Gastrocnemius medialis (tissue), 4 donors: ENCODE measurements at regions of chr17 and their contacts with region 1.

Region 1: GRCh38 chr17:52106638-52107261 is 51.8 kb downstream of the CA10 start:
- DNase-seq: no peak
- ATAC-seq: no peak
- H3K4me3 ChIP-seq: no peak overlapping the region
- H3K27ac ChIP-seq: no peak overlapping the region
- H3K4me1 ChIP-seq: no peaks in the 10 kb centered on the region
- H3K27me3 ChIP-seq: no peaks in the 10 kb centered on the region
- CTCF ChIP-seq: peak; percentile 33 to 64 (median 46)
- POLR2A ChIP-seq: no peak

Region 2: GRCh38 chr17:51322390-51323029 is 784.2 kb before region 1 on chr17:
- in situ Hi-C with region 1: loop called in 1 of 4 experiments (anchors 25 kb)
- intact Hi-C with region 1: no loop called
- DNase-seq: no peak
- ATAC-seq: no peak
- H3K4me3 ChIP-seq: no peak overlapping the region
- H3K27ac ChIP-seq: no peak overlapping the region
- H3K4me1 ChIP-seq: no peaks in the 10 kb centered on the region
- H3K27me3 ChIP-seq: no peaks in the 10 kb centered on the region
- CTCF ChIP-seq: no peak
- POLR2A ChIP-seq: no peak

Region 3: DNA sequence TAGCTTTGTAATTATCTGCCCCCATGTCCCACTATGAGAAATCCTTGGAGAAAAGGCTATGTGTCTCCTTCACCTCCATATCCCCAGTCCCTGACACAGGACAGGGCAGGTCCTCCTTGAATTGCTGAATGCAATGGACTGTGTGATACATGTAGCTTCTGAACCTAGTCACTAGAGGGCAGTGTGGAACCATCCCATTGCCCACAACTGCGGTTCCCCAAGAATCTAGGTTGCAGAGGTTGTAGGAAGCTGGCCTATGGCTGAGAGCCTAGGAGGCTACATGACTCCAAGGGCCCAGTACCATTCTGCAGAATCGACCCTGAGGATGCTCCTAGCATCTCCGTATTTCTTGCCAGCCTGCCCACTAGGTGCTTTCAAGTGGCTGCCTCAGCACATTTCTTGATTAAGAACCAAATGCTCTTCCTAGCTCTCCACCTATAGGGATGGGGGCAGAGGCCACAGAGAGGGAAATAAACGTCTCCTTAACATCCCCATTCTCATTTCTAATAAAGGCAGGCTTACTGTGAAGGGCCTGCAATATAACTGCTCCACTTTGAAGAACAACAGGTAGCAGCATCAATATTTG is 342.3 kb before region 1 on chr17:
- in situ Hi-C with region 1: loop called in 1 of 4 experiments (anchors 10 kb)
- intact Hi-C with region 1: no loop called
- DNase-seq: no peak
- ATAC-seq: peak; percentile 65 to 85
- H3K4me3 ChIP-seq: no peak overlapping the region
- H3K27ac ChIP-seq: no peak overlapping the region
- H3K4me1 ChIP-seq: no peaks in the 10 kb centered on the region
- H3K27me3 ChIP-seq: no peaks in the 10 kb centered on the region
- CTCF ChIP-seq: peak in 4 of 5 experiments; percentile 19 to 83 (median 59)
- POLR2A ChIP-seq: no peak

Region 4: GRCh38 chr17:52024300-52024870 is 82.4 kb before region 1 on chr17:
- in situ Hi-C with region 1: loop called in 1 of 4 experiments (anchors 25 kb)
- intact Hi-C with region 1: no loop called
- DNase-seq: no peak
- ATAC-seq: no peak
- H3K4me3 ChIP-seq: no peak overlapping the region
- H3K27ac ChIP-seq: no peak overlapping the region
- H3K4me1 ChIP-seq: no peaks in the 10 kb centered on the region
- H3K27me3 ChIP-seq: no peaks in the 10 kb centered on the region
- CTCF ChIP-seq: no peak
- POLR2A ChIP-seq: no peak

Region 5: GRCh38 chr17:52158450-52159042 is 51.8 kb after region 1 on chr17 and contains the start of gene CA10:
- in situ Hi-C with region 1: no loop called
- intact Hi-C with region 1: no loop called
- DNase-seq: no peak
- ATAC-seq: no peak
- H3K4me3 ChIP-seq: peak within 1 kb of the TSS in 2 of 4 donors; percentile 26 to 31
- H3K27ac ChIP-seq: no peak within 1 kb of the TSS
- H3K4me1 ChIP-seq: peaks cover 0 to 8% of the 10 kb centered on the region in 2 donors
- H3K27me3 ChIP-seq: peaks cover 40 to 54% (median 46%) of the 10 kb centered on the region in 3 donors
- CTCF ChIP-seq: no peak
- POLR2A ChIP-seq: no peak
- total RNA-seq, gene CA10: not detected